ENCODE measurements at regions of chr19 and their contacts with region 1.

Region 1: GRCh38 chr19:796692-797527 is at the start of gene PTBP1:
- DNase-seq: peak; percentile 96 to 100
- H3K4me3 ChIP-seq: peak within 1 kb of the TSS; percentile 88 to 100 (median 96)
- H3K27ac ChIP-seq: peak within 1 kb of the TSS; percentile 75
- H3K4me1 ChIP-seq: peaks cover 0 to 32% (median 23%) of the 10 kb centered on the region in 4 experiments; a peak in 6 of 7 replicates
- H3K27me3 ChIP-seq: no peaks in the 10 kb centered on the region
- CTCF ChIP-seq: no peak
- EP300 ChIP-seq: 0 out of 3 replicates have a peak, but pooled peaks of 1 of the 2 experiments have one; percentile 13
- POLR2A ChIP-seq: peak in 1 of 2 experiments; percentile 96; a peak in 2 of 3 replicates
- RAD21 ChIP-seq: no peak
- total RNA-seq, gene PTBP1: 873 and 888 TPM in 2 replicates

Region 2: DNA sequence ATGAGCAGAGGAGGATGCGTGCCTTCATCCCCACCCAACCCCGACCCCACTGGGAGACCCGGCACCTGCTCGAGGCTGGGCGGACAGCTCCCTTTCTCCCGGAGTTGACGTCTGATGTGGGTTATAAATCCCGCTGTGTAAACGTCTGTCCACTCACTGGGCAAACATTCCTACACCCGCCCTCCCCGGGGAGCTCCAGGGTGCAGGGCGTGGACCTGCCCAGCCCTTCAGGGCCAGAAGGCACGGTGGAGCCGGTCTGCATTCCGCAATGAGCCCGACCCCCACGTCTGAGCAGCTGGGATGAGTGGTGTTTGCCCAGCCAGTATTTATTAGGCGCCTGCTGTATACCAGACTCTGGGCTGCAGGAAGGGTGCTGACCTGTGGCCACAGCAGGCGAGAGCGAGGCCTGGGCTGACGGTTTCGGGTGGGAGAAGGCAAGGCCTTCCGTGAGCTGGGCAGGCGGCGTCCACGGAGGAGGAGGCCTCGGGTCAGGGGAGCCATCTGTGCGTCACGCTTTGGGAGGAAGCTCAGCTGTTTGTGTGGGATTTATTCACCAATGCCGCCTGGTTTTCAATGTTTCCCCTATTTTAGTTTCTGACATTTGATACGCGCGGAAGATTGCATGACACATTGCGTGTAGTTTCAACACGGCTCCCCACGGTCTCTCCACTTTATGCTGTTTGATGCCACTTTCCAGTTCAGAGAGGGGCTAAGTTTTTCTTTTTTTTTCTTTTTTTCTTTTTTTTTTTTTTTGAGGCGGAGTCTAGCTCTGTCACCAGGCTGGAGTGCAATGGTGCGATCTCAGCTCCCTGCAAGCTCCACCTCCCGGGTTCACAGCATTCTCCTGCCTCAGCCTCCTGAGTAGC is 44.0 kb before region 1 on chr19:
- CTCF ChIA-PET with region 1: interaction called, 3 read pairs
- POLR2A ChIA-PET with region 1: interaction called, 10 read pairs
- DNase-seq: no peak
- H3K4me3 ChIP-seq: no peak overlapping the region
- H3K27ac ChIP-seq: no peak overlapping the region
- H3K4me1 ChIP-seq: peaks cover 0 to 5% (median 3%) of the 10 kb centered on the region in 4 experiments; a peak in 3 of 7 replicates
- H3K27me3 ChIP-seq: no peaks in the 10 kb centered on the region
- CTCF ChIP-seq: no peak
- EP300 ChIP-seq: no peak
- POLR2A ChIP-seq: no peak
- RAD21 ChIP-seq: no peak

Region 3: DNA sequence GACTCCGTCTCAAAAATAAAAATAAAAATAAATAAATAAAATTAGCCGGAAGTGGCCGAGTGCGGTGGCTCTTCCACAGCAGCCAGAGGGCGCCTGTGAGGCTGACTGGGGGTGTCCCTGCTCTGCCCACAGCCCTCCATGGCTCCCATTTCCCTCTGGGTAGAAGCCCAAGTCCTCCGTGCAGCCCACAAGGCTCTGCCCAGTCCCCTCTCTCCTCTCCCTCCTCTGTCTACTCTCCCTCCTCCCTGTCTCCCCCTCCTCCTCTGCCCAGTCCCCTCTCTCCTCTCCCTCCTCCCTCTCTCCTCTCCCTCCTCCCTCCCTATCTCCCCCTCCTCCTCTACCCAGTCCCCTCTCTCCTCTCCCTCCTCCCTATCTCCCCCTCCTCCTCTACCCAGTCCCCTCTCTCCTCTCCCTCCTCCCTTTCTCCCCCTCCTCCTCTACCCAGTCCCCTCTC is 25.6 kb before region 1 on chr19:
- CTCF ChIA-PET with region 1: interaction called, 23 read pairs
- POLR2A ChIA-PET with region 1: interaction called, 61 read pairs
- DNase-seq: no peak
- H3K4me3 ChIP-seq: no peak overlapping the region
- H3K27ac ChIP-seq: no peak overlapping the region
- H3K4me1 ChIP-seq: no peaks in the 10 kb centered on the region; a peak in 1 of 7 replicates
- H3K27me3 ChIP-seq: no peaks in the 10 kb centered on the region
- CTCF ChIP-seq: peak; percentile 41 to 59 (median 43); a peak in 3 of 4 replicates
- EP300 ChIP-seq: no peak
- POLR2A ChIP-seq: no peak
- RAD21 ChIP-seq: peak; percentile 29 to 35; a peak in 2 of 4 replicates

Region 4: DNA sequence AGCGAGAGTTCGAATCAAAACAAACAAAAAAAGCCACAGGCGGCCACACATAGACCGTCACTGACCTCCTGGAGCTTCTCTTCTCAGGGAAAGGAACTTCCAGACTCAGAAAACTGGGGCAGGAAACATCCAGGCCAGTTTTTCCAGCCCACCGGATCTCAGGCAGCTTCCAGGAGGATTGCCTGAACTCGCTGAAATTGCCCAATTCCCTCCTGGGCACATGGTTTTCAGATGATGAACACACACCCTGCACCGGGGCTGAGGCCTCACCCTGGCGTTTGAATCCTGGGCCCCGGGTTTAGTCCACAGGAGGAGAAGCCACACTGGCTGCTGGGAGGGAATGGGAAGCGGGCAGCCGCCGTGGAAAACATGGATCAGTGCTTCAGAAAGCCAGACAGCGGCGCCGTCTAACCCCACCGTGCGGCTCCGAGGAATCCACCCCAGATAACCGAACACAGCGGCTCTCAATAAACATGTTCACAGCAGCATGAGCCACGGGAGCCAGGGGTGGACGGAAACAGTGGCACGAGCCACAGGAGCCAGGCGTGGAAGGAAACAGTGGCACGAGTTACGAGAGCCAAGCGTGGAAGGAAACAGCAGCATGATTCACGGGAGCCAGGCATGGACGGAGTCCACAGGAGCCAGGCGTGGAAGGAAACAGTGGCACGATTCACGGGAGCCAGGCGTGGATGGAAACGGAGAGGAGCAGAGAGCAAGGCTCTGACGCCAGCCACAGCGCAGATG is 17.8 kb before region 1 on chr19:
- CTCF ChIA-PET with region 1: interaction called, 10 read pairs
- POLR2A ChIA-PET with region 1: interaction called, 61 read pairs
- DNase-seq: no peak
- H3K4me3 ChIP-seq: no peak overlapping the region
- H3K27ac ChIP-seq: no peak overlapping the region
- H3K4me1 ChIP-seq: peaks cover 7 to 15% (median 11%) of the 10 kb centered on the region in 4 experiments
- H3K27me3 ChIP-seq: no peaks in the 10 kb centered on the region
- CTCF ChIP-seq: no peak
- EP300 ChIP-seq: no peak
- POLR2A ChIP-seq: no peak
- RAD21 ChIP-seq: no peak

Region 5: DNA sequence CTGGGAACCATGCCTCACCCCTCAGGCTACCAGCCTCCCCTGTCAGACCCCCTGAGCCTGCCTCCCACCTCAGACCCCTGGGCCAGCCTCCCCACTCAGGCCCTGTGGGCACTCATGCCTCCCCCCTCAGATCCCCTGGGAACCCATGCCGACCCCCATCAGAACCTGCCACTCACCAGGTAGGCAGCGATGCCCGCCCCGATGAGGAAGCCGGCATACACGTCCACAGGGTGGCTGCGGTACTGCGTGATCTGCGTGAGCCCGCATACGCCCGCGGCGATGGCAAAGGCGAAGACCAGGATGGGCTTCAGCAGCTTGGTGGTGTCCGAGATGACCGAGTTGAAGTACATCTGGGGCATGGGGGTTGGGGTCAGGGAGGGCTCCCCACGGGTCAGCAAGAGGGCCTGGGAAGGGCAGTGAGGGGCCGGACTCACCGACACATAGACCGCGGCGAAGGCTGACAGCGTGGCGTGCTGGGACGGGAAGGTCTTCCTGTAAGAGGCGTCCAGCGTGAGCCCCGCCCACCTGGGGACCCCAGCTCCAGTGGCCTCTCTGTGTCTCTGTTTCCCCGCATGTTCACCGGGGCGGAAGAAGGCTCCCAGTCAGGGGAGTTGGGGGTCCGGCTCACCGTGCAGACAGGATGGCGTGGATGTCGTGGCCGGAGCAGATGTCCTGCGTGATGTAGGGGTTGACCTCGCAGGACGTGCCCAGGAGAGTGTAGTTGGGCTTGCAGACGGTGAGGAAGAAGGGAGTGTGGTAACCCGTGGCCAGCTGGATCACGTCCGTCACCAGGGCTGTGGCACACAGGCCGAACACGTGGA is 17.6 kb after region 1 on chr19:
- CTCF ChIA-PET with region 1: interaction called, 5 read pairs
- POLR2A ChIA-PET with region 1: interaction called, 277 read pairs
- DNase-seq: no peak
- H3K4me3 ChIP-seq: no peak overlapping the region
- H3K27ac ChIP-seq: no peak overlapping the region
- H3K4me1 ChIP-seq: no peaks in the 10 kb centered on the region
- H3K27me3 ChIP-seq: no peaks in the 10 kb centered on the region
- CTCF ChIP-seq: no peak
- EP300 ChIP-seq: no peak
- POLR2A ChIP-seq: no peak
- RAD21 ChIP-seq: no peak

Region 6: GRCh38 chr19:823565-824121 is 26.7 kb after region 1 on chr19:
- CTCF ChIA-PET with region 1: no interaction called
- POLR2A ChIA-PET with region 1: interaction called, 277 read pairs
- DNase-seq: peak in 1 of 2 experiments; percentile 66
- H3K4me3 ChIP-seq: no peak overlapping the region
- H3K27ac ChIP-seq: no peak overlapping the region
- H3K4me1 ChIP-seq: peaks cover 0 to 7% (median 5%) of the 10 kb centered on the region in 4 experiments; a peak in 5 of 7 replicates
- H3K27me3 ChIP-seq: no peaks in the 10 kb centered on the region
- CTCF ChIP-seq: no peak
- EP300 ChIP-seq: no peak
- POLR2A ChIP-seq: no peak
- RAD21 ChIP-seq: no peak

Region 7: DNA sequence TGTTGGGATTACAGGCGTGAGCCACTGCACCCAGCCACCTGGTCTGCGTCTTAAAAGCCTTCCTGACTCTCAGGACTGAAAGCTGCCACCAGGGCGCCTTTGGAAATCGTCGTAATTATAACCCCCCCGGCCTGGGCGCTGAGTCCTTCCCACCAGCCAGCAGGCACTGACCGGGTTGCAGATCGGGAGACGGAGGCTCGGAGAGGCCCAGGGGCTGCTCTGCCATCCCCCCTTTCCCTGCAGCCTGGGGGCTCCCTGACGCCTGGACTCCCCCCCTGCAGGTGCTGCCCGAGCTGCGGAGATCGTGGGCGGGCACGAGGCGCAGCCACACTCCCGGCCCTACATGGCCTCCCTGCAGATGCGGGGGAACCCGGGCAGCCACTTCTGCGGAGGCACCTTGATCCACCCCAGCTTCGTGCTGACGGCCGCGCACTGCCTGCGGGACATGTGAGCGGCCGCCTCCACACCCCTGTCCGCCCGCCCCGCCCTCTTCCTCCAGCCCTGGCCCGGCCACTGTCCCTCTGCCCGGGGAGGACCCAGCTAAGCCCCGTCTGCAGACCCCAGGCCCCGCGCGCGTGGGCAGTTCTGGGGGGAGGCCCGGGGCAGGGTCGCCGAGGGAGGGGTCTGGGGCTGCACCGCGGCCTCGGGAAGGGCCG is 46.4 kb after region 1 on chr19:
- CTCF ChIA-PET with region 1: no interaction called
- POLR2A ChIA-PET with region 1: interaction called, 30 read pairs
- DNase-seq: no peak
- H3K4me3 ChIP-seq: peak overlapping the region in 3 of 4 experiments; percentile 23 to 53 (median 30); a peak in 5 of 8 replicates
- H3K27ac ChIP-seq: no peak overlapping the region
- H3K4me1 ChIP-seq: peaks cover 0 to 6% (median 4%) of the 10 kb centered on the region in 4 experiments; a peak in 4 of 7 replicates
- H3K27me3 ChIP-seq: peaks cover 7 to 21% (median 16%) of the 10 kb centered on the region in 4 experiments
- CTCF ChIP-seq: peak in 2 of 3 experiments; percentile 3 to 5; a peak in 1 of 4 replicates
- EP300 ChIP-seq: no peak
- POLR2A ChIP-seq: no peak
- RAD21 ChIP-seq: no peak

Measured in H1 (cell line).